Endothelial cell of umbilical vein (primary cell): ENCODE measurements at regions of chr2 and their contacts with region 1.

Region 1: DNA sequence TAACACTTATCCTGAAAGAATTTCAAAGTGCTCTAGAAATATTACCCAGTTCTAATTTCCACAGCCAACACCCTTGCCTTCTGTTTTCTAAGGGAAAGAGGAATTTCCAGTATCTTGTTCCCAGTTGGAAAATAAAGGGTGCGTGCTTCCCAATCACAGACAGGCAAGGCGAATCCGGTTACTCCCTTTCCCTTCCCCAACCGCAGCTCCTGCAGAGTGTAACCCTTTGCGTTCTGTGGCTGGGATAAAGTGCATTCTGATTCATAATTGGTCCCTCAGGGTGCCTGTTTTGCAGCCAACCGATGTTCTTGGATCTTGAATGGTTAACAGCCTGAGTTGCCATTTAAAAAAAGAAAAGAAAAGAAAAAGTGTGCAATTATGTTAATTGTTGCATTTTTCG is 40.6 kb upstream of the PGAP1 start:
- DNase-seq: peak; percentile 28
- H3K4me3 ChIP-seq: peak overlapping the region in 1 of 3 experiments; percentile 2
- H3K27ac ChIP-seq: no peak overlapping the region
- H3K4me1 ChIP-seq: peaks cover 20% of the 10 kb centered on the region
- H3K27me3 ChIP-seq: no peaks in the 10 kb centered on the region
- CTCF ChIP-seq: no peak
- POLR2A ChIP-seq: no peak

Region 2: GRCh38 chr2:196987649-196988364 is 20.7 kb after region 1 on chr2:
- CTCF ChIA-PET with region 1: no interaction called
- POLR2A ChIA-PET with region 1: interaction called, 3 read pairs
- dilution Hi-C with region 1: no loop called
- intact Hi-C with region 1: loop called (anchors 2 kb)
- DNase-seq: peak; percentile 98
- H3K4me3 ChIP-seq: peak overlapping the region in 1 of 3 experiments; percentile 24
- H3K27ac ChIP-seq: peak overlapping the region; percentile 93
- H3K4me1 ChIP-seq: peaks cover 18% of the 10 kb centered on the region
- H3K27me3 ChIP-seq: no peaks in the 10 kb centered on the region
- CTCF ChIP-seq: no peak
- POLR2A ChIP-seq: peak; percentile 47